Calu3 (cell line): ENCODE measurements at regions of chr15 and their contacts with region 1.

Region 1: GRCh38 chr15:57861036-57861638 is 154.6 kb downstream of the POLR2M start:
- DNase-seq: peak; percentile 61
- H3K4me3 Mint-ChIP-seq: no peak overlapping the region
- H3K27ac Mint-ChIP-seq: no peak overlapping the region
- H3K4me1 Mint-ChIP-seq: peaks cover 5% of the 10 kb centered on the region
- H3K27me3 Mint-ChIP-seq: peaks cover 21% of the 10 kb centered on the region
- CTCF ChIP-seq: peak; percentile 56

Region 2: DNA sequence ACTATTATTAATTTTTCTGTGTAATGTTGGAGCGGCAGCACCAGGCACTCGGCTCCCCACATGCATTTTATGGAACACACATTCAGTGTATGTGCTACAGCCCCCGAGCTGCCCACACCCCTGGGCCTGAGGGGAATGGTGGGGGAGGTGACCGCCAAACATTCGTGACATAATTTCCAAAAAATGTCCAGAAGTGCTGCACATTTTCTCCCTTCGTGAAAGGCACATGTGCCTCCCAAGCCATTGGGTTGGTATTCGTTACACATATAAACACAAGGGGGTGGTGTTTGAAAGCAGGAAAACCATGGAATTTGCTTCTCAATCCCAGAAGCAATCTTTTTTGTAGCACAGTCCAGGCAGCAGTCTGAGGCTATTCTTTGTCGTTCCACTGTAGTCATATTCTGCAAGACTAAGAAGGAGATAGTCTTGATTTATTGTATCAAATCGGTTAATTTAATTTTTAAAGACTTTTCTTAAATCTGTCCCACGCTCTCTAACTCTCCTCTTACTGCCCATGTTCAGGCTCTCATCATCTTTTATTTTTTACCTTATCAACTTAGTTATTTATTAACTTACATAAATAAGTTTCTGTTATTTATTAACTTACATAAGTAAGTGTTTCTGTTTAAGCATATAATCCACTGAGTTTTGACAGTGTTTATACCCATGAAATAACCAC is 193.8 kb before region 1 on chr15:
- CTCF ChIA-PET with region 1: interaction called, 14 read pairs
- intact Hi-C with region 1: loop called (anchors 1 kb)
- DNase-seq: peak; percentile 55
- H3K4me3 Mint-ChIP-seq: peak overlapping the region; percentile 47
- H3K27ac Mint-ChIP-seq: peak overlapping the region; percentile 1
- H3K4me1 Mint-ChIP-seq: peaks cover 66% of the 10 kb centered on the region
- H3K27me3 Mint-ChIP-seq: no peaks in the 10 kb centered on the region
- CTCF ChIP-seq: no peak

Region 3: GRCh38 chr15:57732526-57733331 is 128.4 kb before region 1 on chr15:
- CTCF ChIA-PET with region 1: interaction called, 10 read pairs
- intact Hi-C with region 1: no loop called
- DNase-seq: peak; percentile 78
- H3K4me3 Mint-ChIP-seq: no peak overlapping the region
- H3K27ac Mint-ChIP-seq: no peak overlapping the region
- H3K4me1 Mint-ChIP-seq: no peaks in the 10 kb centered on the region
- H3K27me3 Mint-ChIP-seq: no peaks in the 10 kb centered on the region
- CTCF ChIP-seq: peak; percentile 90

Region 4: GRCh38 chr15:57751177-57751800 is 109.8 kb before region 1 on chr15:
- CTCF ChIA-PET with region 1: interaction called, 84 read pairs
- intact Hi-C with region 1: loop called (anchors 1 kb)
- DNase-seq: peak; percentile 37
- H3K4me3 Mint-ChIP-seq: no peak overlapping the region
- H3K27ac Mint-ChIP-seq: no peak overlapping the region
- H3K4me1 Mint-ChIP-seq: no peaks in the 10 kb centered on the region
- H3K27me3 Mint-ChIP-seq: no peaks in the 10 kb centered on the region
- CTCF ChIP-seq: peak; percentile 40

Region 5: DNA sequence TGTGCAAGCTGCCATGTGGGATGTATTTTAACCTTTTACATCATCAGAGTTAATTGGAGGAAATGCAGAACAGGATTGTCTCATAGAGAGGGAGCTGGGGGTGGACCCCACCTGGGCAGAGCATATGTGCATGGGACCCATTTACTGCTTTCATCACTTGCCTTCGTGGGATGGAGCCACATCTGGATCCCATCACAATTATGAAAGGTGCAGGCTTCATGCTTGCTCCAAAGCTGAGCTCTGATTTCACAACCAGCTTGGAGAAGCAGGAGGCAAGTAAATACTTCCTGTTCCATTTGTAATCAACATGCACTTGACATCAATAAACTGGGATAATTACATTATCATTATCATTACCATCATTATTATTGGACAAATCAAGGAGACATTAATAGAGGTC is 42.5 kb after region 1 on chr15:
- CTCF ChIA-PET with region 1: no interaction called
- intact Hi-C with region 1: no loop called
- DNase-seq: no peak
- H3K4me3 Mint-ChIP-seq: no peak overlapping the region
- H3K27ac Mint-ChIP-seq: no peak overlapping the region
- H3K4me1 Mint-ChIP-seq: no peaks in the 10 kb centered on the region
- H3K27me3 Mint-ChIP-seq: peaks cover 39% of the 10 kb centered on the region
- CTCF ChIP-seq: no peak